ENCODE measurements at regions of chr6 and their contacts with region 1.

Region 1: GRCh38 chr6:30914076-30914853 is at the start of gene VARS2:
- DNase-seq: peak; percentile 95
- H3K4me3 ChIP-seq: peak within 1 kb of the TSS; percentile 44 to 74 (median 57)
- H3K27ac ChIP-seq: peak within 1 kb of the TSS; percentile 92 to 94 (median 94)
- H3K4me1 ChIP-seq: peaks cover 9 to 26% (median 18%) of the 10 kb centered on the region in 4 donors
- H3K27me3 ChIP-seq: no peaks in the 10 kb centered on the region
- CTCF ChIP-seq: peak; percentile 14 to 53 (median 30)
- EP300 ChIP-seq: no peak
- POLR2A ChIP-seq: peak; percentile 89
- total RNA-seq, gene VARS2: 13.1 to 64.7 (median 25.8) TPM

Region 2: DNA sequence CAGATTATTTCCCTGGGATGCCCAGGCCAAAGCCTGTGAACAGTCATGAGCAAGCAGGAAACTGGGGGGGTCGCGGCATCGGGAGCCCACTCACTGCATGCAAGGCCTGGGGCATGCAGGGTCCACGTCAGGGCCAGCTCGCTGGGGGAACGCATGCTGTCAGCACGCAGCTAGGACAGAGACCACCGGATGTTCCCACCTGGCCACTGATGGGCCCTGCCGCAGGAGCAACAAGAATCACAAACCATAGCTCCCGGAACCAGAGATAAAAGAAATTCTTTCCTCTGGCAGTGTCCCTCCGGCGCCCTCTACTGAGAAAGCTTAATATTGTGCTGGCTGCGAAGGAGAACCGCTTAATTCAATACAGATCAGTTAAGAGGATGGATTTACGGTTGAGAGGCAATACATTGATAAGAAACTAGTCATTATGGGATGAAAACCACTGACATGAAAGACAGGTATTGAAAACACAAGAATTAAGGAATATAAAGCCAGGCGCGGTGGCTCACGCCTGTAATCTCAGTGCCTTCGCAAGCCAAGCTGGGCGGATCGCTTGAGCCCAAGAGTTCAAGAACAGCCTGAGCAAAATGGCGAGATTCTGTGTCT is 165.5 kb after region 1 on chr6:
- in situ Hi-C with region 1: loop called in 3 of 4 experiments (anchors 5 to 10 kb)
- intact Hi-C with region 1: no loop called
- DNase-seq: peak; percentile 64
- H3K4me3 ChIP-seq: peak overlapping the region in 1 of 4 donors; percentile 2
- H3K27ac ChIP-seq: no peak overlapping the region
- H3K4me1 ChIP-seq: peaks cover 0 to 4% (median 0%) of the 10 kb centered on the region in 4 donors
- H3K27me3 ChIP-seq: peaks cover 14% of the 10 kb centered on the region
- CTCF ChIP-seq: peak; percentile 70 to 84 (median 76)
- EP300 ChIP-seq: no peak
- POLR2A ChIP-seq: no peak

Region 3: GRCh38 chr6:31525932-31526591 is 611.8 kb after region 1 on chr6:
- in situ Hi-C with region 1: no loop called
- intact Hi-C with region 1: no loop called
- DNase-seq: no peak
- H3K4me3 ChIP-seq: no peak overlapping the region
- H3K27ac ChIP-seq: no peak overlapping the region
- H3K4me1 ChIP-seq: no peaks in the 10 kb centered on the region
- H3K27me3 ChIP-seq: no peaks in the 10 kb centered on the region
- CTCF ChIP-seq: no peak
- EP300 ChIP-seq: no peak
- POLR2A ChIP-seq: no peak

Measured in transverse colon (tissue), 4 donors.